Dorsolateral prefrontal cortex (tissue), 120 donors: ENCODE measurements at regions of chr14 and their contacts with region 1.

Region 1: GRCh38 chr14:93655078-93655750 is 133.1 kb downstream of the PRIMA1 start:
- DNase-seq: peak in 2 of 10 donors; percentile 22 to 45
- H3K4me3 ChIP-seq: peak overlapping the region in 7 of 59 donors; percentile 1 to 35 (median 14)
- H3K27ac ChIP-seq: peak overlapping the region in 11 of 59 donors; percentile 1 to 61 (median 32)
- H3K27me3 ChIP-seq: no peaks in the 10 kb centered on the region
- CTCF ChIP-seq: peak; percentile 45 to 91 (median 76)

Region 2: GRCh38 chr14:92973261-92973797 is 681.9 kb before region 1 on chr14:
- intact Hi-C with region 1: no loop called
- DNase-seq: peak; percentile 50 to 91 (median 86)
- H3K4me3 ChIP-seq: no peak overlapping the region
- H3K27ac ChIP-seq: peak overlapping the region; percentile 24 to 92 (median 85)
- H3K27me3 ChIP-seq: no peaks in the 10 kb centered on the region
- CTCF ChIP-seq: peak; percentile 67 to 95 (median 85)

Region 3: DNA sequence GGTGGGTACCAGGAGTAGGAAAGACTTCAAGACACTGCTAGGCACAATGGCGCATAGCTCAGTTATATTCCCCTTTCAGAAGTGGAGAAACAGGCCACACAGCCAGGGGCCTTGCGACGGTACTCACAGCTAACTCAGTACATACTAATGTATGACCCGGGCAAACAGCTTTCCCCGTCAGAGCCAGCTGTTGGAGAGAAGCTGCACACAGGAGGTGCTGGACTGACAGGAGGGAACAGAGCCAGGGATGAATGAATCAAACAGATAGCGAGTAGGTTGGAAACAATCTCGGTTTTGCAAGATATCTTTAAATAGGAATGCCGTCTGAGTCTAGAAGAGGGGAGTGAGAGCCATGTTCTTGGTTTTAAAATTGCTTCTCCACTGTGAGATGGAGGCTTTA is 87.5 kb after region 1 on chr14:
- intact Hi-C with region 1: loop called in 1 of 2 experiments (anchors 5 kb)
- DNase-seq: peak in 3 of 10 donors; percentile 32 to 60 (median 47)
- H3K4me3 ChIP-seq: no peak overlapping the region
- H3K27ac ChIP-seq: peak overlapping the region in 54 of 59 donors; percentile 30 to 97 (median 88)
- H3K27me3 ChIP-seq: peaks cover 0 to 9% (median 0%) of the 10 kb centered on the region in 45 donors
- CTCF ChIP-seq: no peak

Region 4: DNA sequence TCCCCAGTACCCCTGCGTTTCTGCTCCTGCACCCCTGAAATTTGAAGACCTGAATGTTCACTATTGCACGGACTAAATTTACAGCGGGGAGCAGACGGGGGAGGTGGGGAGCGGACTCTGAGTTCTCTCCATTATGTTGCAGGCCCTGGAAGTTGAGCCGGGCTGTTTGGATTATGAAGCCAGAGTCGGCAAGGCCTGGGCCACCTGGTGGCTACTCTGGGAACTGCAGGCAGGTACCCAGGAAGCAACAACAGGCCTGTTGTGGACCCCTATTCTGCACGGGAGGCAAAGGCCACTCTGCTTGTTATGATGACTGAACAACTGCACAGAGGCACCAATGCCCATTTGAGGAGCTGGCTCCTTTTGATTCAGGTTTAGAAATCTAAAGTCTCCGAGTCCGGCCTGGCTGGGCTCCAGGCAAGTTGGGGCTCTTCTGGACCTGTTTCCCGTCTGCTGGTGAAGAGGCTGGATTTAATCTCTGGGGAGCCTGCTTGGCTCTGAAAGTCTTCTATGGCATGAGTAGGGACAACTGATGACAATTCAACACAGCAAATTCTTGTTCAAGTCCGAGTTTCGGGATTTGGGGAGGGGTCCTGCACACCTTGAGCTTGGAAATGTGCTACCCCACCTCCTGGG is 237.8 kb after region 1 on chr14:
- intact Hi-C with region 1: loop called (anchors 2 to 5 kb)
- DNase-seq: peak; percentile 59 to 85 (median 78)
- H3K4me3 ChIP-seq: peak overlapping the region in 1 of 59 donors; percentile 6
- H3K27ac ChIP-seq: no peak overlapping the region
- H3K27me3 ChIP-seq: peaks cover 0 to 17% (median 0%) of the 10 kb centered on the region in 45 donors
- CTCF ChIP-seq: peak; percentile 87 to 99 (median 98)

Region 5: GRCh38 chr14:94120667-94121340 is 465.6 kb after region 1 on chr14:
- intact Hi-C with region 1: no loop called
- DNase-seq: peak in 2 of 10 donors; percentile 18 to 22
- H3K4me3 ChIP-seq: no peak overlapping the region
- H3K27ac ChIP-seq: no peak overlapping the region
- H3K27me3 ChIP-seq: no peaks in the 10 kb centered on the region
- CTCF ChIP-seq: no peak